GM10248 (cell line): ENCODE measurements at regions of chr1 and their contacts with region 1.

Region 1: DNA sequence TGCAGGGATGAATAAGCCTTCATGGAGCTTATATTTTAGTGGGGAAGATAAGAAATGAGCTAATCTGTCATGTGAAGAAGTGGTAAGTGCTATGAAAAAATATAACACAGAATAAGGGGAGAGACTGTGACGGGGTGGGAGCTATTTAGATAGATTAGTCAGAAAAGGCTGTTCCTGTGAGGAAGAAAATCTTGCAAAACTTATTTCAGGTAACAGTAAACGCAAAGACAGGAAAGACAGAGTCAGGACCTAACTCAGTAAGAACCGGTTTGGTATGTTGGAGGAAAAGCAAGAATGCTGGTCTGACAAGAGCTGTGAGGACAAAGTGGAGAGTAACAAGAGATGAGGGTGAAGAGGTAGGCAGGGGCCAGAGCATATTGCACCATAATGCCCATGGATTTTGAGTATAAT is 22.0 kb downstream of the GNAI3 start:
- DNase-seq: no peak
- CTCF ChIP-seq: no peak

Region 2: GRCh38 chr1:109559995-109560394 is 10.4 kb before region 1 on chr1:
- CTCF ChIA-PET with region 1: interaction called, 12 read pairs
- POLR2A ChIA-PET with region 1: no interaction called
- DNase-seq: no peak
- CTCF ChIP-seq: no peak

Region 3: GRCh38 chr1:109649491-109649914 is 79.1 kb after region 1 on chr1:
- CTCF ChIA-PET with region 1: no interaction called
- POLR2A ChIA-PET with region 1: no interaction called
- DNase-seq: no peak
- CTCF ChIP-seq: peak; percentile 16